Aorta (tissue), 5 donors: ENCODE measurements at regions of chr11 and their contacts with region 1.

Region 1: DNA sequence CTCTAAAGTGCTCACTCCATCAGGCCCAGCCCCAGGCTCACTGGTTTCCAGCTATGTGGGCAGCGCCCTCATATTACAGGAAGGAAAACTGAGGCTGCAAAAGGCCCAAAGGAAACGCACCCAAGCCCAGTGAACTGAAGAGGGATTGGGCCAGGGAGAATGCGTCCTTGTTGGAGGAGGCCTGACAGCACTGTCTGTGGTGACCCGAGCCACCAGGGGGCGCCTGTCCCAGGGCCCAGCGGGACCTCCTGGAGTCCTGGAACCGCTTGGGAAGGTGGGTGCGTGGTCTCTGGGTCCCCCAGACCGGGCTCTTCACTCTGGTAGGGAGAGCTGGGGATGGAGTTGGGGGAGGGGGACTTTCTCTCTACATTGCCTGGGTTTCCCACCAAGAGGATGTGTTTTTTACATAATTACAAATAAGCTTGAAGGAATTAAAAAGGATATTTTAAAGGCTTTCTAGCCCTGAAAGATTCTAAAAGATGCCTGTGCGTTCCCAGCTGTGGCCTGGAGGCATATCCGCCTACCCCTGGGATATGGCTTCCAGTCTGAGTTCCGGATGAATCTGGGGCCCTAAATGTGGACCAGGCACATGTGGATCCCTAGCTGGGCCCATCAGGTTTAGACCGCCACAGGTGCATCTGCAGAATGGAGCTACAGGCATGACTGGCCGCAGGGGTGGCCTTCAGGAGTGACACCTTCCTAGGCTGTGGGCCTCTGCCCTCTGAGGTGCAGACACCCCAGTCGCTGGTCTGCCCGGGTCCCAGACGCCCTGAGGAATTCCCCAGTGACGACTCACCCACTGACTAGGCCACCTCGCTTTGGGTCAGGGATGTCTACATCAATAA is 4.2 kb downstream of the SPI1 start:
- DNase-seq: peak; percentile 89 to 97
- ATAC-seq: peak; percentile 79
- H3K4me3 ChIP-seq: no peak overlapping the region
- H3K27ac ChIP-seq: no peak overlapping the region
- H3K4me1 ChIP-seq: no peaks in the 10 kb centered on the region
- H3K27me3 ChIP-seq: no peaks in the 10 kb centered on the region

Region 2: GRCh38 chr11:47171856-47172255 is 202.2 kb before region 1 on chr11:
- intact Hi-C with region 1: no loop called
- DNase-seq: no peak
- ATAC-seq: no peak
- H3K4me3 ChIP-seq: no peak overlapping the region
- H3K27ac ChIP-seq: no peak overlapping the region
- H3K4me1 ChIP-seq: no peaks in the 10 kb centered on the region
- H3K27me3 ChIP-seq: no peaks in the 10 kb centered on the region

Region 3: DNA sequence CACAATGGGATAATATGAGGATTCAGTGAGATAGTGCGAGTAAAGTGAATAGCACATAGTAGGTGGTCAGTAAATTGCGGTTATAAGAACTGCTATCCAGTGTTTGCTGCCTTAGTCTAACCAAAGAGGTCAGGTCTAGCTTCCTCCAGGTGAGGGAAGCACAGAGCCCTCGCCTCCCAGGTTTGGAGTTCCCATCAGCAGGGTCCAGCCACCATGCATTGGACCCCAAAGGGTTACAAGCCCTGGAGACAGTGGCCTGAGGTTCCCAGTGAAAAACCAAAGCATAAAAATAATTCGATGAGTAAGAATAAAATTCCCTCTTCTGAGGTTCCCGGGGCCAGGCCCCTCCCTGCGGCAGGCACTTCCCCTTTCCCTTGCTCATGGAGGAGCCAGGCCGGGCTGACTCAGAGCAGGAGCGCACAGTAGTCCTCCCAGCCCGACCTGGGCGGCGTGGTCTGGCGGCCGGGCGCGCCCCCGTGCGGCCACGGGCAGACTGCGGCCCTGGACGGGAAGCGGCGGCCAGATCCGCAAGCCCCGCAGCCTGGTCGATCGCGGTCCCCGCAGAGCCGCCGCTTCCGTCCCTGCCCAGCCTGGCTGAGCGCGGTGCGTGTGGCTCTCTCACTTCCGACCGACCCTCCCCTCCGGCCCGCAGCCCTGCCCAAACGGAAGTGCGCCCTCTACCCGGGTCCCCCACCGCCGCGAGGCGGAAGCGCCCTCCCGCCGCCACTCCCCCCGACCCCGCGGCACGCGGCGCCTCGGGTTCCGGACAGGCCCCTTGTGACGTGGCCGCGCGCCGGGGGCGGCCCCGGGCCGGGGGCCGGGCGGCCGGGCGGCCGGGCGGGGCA is 33.9 kb after region 1 on chr11 and contains the start of gene SLC39A13:
- intact Hi-C with region 1: loop called in 1 of 2 experiments (anchors 5 kb)
- DNase-seq: peak; percentile 97 to 98
- ATAC-seq: peak; percentile 95
- H3K4me3 ChIP-seq: peak within 1 kb of the TSS; percentile 58
- H3K27ac ChIP-seq: peak within 1 kb of the TSS; percentile 78 to 94
- H3K4me1 ChIP-seq: no peaks in the 10 kb centered on the region
- H3K27me3 ChIP-seq: no peaks in the 10 kb centered on the region
- total RNA-seq, gene SLC39A13: 75.1 to 88.9 TPM

Region 4: DNA sequence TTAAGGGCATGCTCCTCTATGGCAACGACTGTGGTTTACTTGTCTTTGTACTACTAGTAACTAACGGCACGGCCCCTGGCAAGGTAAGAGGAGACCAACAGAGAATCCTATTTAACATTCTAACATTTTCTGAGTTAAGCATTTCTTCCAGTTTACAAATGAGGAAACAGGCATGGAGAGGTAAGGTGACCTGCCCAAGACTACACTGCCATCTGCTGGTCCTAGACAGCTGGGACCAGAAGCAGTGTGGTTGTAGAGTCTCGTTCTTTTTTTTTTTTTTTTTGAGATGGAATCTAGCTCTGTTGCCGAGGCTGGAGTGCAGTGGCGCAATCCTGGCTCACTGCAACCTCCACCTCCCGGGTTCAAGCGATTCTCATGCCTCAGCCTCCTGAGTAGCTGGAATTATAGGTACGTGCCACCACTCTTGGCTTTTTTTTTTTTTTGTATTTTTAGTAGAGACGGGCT is 80.1 kb after region 1 on chr11:
- intact Hi-C with region 1: loop called (anchors 1 kb)
- DNase-seq: peak; percentile 82 to 85
- ATAC-seq: peak; percentile 93
- H3K4me3 ChIP-seq: no peak overlapping the region
- H3K27ac ChIP-seq: no peak overlapping the region
- H3K4me1 ChIP-seq: no peaks in the 10 kb centered on the region
- H3K27me3 ChIP-seq: no peaks in the 10 kb centered on the region

Region 5: DNA sequence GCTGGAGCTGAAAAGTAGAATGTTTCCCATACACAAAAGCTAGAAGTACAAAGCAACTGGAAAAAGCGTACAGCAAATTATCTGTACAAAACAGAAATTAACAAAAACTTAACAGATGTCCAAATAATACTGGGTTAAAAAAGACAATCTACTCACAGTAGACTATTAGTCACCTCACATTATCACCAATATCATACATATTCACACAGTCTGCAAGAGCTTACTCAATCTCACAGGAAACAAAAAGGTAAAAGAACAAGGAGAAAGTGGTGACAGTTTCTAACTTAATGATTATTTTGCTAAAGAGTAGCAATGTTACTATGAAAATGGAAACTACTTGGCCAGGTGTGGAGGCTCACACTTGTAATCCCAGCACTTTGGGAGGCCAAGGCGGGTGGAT is 167.0 kb after region 1 on chr11:
- intact Hi-C with region 1: no loop called
- DNase-seq: no peak
- ATAC-seq: no peak
- H3K4me3 ChIP-seq: no peak overlapping the region
- H3K27ac ChIP-seq: no peak overlapping the region
- H3K4me1 ChIP-seq: peaks cover 1 to 7% of the 10 kb centered on the region in 2 donors
- H3K27me3 ChIP-seq: no peaks in the 10 kb centered on the region

Region 6: DNA sequence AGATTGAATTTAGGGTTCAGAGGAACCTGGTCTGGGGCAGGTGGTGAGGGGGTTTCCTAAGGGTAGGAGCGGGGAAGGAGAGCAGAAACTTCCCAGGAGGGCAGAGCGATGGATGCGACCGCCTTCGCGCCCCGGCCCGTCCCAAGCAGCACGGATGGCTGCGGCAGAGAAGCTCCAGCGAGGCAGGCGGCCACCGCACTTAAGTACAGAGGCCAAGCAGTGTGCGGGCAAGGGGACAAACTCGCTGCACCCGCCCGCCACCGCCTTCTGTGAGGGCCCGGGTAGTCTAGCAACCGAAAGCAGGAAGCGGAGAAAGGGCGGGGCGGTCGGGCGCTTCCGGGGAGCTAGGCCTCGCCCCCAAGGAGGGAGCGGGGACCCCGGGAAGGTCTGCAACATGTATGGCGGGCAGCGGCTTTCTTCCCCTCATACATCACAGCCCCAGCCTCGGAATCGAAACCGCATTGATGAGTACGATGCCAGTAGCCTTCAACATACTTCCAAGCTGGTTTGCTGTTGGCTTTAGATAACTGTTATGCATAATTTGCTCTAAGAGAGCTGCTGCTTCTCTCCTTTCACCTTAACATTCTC is 341.1 kb after region 1 on chr11 and contains the start of gene AGBL2:
- intact Hi-C with region 1: no loop called
- DNase-seq: peak; percentile 87 to 92
- ATAC-seq: peak; percentile 92
- H3K4me3 ChIP-seq: peak within 1 kb of the TSS; percentile 45 to 48
- H3K27ac ChIP-seq: peak within 1 kb of the TSS in 1 of 2 donors; percentile 1
- H3K4me1 ChIP-seq: no peaks in the 10 kb centered on the region
- H3K27me3 ChIP-seq: no peaks in the 10 kb centered on the region
- total RNA-seq, gene AGBL2: 0.75 to 2.0 TPM